Adrenal gland (tissue), 19 donors: ENCODE measurements at regions of chr13 and their contacts with region 1.

Region 1: DNA sequence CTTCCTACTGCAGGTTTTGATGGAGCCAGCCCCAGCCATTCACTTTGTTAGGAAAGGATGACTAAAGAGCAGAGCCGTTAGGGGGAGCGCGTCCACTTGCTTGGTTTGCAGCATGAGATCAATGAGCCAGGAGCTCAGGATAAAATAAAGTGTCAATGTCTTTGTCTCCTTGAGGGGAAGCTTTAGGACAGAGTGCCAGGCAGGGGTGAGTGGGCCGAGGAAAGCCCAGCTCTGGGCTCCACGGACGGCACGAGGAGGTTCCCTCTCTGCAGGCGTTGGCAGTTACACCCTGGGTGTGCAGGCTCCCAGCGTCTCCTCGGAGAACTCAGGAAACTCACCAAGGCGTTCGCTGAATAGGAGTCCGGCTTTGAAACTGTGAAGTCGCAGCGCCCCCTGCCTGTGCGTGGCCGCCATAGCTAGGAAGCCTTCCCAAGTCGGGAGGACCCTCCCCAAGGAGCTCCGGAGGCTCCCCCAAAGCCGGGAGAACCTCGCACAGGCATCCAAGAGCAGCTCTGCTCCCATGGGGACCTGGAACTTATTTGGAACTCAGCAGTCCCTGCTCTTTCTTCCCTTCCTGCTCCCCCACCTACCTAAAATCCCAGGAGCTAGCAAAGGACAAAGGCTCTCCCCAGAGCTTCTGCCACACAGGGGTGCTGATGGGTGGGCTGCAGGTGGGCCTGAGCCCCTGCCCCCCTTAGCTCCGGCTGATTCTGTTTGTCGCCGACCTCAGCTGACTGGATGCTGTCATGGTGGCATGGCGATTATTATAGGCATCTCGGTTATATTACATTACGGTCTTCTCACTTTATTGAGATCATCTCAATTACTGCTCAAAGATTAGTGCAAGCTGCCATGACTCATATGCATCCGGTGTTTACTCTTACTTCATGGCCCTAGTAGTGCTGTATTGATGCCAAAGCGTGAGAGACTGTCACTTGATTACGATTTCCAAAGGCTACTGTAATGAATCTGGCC is 34.4 kb downstream of the GSX1 start:
- DNase-seq: peak; percentile 72 to 91 (median 81)
- H3K4me3 ChIP-seq: peak overlapping the region in 1 of 4 donors; percentile 44
- H3K27ac ChIP-seq: no peak overlapping the region
- H3K4me1 ChIP-seq: no peaks in the 10 kb centered on the region
- H3K27me3 ChIP-seq: peaks cover 47% of the 10 kb centered on the region
- CTCF ChIP-seq: peak; percentile 74 to 93 (median 92)
- POLR2A ChIP-seq: no peak

Region 2: GRCh38 chr13:26985285-26985878 is 841.3 kb before region 1 on chr13:
- intact Hi-C with region 1: loop called in 1 of 2 experiments (anchors 10 kb)
- DNase-seq: peak; percentile 59 to 91 (median 74)
- H3K4me3 ChIP-seq: no peak overlapping the region
- H3K27ac ChIP-seq: no peak overlapping the region
- H3K4me1 ChIP-seq: no peaks in the 10 kb centered on the region
- H3K27me3 ChIP-seq: peaks cover 8% of the 10 kb centered on the region
- CTCF ChIP-seq: peak; percentile 50 to 94 (median 88)
- POLR2A ChIP-seq: no peak

Region 3: DNA sequence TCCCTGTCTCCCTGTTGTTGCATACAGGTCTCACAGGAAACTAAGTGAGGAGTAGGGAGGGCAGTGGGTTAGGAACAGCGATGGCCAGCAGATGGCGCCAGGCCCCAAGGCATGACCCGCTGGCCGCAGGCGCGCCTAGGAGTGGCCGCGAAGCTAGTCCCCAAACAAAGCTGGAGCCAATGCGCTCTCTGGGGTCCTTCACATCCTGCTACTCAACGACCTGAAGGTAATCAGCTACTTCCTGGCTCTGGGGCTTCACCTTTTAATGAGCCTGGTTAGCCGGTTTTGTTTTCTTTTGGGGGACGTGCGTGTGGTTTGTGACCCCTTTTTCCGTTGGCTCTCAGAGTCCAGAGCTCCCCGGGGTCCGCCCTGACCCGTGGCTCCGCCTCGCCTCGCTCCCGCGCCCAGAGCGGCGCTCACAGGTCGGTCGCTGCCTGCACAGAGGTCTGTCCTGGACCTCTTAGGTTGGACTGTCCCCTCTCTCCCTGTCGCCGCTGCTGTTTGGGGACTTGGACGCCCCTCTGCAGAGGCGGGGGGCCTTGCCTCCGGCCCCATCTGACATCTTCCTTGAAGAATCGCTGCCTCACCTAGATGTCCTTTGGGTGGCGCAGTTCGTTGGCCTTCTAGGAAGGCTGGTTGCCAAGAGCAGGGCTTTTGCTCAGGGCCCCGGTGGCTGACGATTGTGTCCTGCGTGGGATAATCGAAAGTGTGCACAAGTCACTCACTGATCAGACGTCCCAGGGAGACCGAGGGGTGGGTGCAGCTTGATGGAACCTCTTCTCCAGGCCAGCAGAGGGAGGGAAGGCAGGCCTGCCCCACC is 464.4 kb before region 1 on chr13:
- intact Hi-C with region 1: loop called in 1 of 2 experiments (anchors 5 kb)
- DNase-seq: peak; percentile 67 to 94 (median 83)
- H3K4me3 ChIP-seq: peak overlapping the region in 2 of 4 donors; percentile 10 to 47
- H3K27ac ChIP-seq: no peak overlapping the region
- H3K4me1 ChIP-seq: peaks cover 0 to 6% of the 10 kb centered on the region in 2 donors
- H3K27me3 ChIP-seq: peaks cover 6% of the 10 kb centered on the region
- CTCF ChIP-seq: peak; percentile 82 to 93 (median 90)
- POLR2A ChIP-seq: no peak

Region 4: DNA sequence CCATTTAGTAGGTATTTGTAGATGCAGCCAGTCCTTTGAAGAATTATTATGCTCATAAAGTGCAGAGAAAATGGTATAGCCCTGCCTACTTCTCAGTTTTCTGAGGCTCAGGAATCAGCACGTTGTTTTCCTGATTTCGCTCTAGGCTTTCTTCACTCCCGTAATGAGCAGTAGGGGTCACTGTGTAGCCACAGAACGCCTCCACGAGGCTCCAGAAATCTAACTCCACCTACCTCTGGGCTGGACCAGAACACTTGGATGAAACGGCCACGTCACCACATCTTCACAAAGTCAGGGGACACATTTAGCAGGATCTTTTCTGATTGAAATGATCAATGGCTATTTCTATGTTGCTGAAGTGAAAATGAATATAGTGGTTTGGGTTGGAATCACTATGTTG is 452.0 kb before region 1 on chr13:
- intact Hi-C with region 1: loop called (anchors 5 kb)
- DNase-seq: peak; percentile 47 to 86 (median 69)
- H3K4me3 ChIP-seq: no peak overlapping the region
- H3K27ac ChIP-seq: no peak overlapping the region
- H3K4me1 ChIP-seq: no peaks in the 10 kb centered on the region
- H3K27me3 ChIP-seq: peaks cover 25% of the 10 kb centered on the region
- CTCF ChIP-seq: peak; percentile 44 to 70 (median 62)
- POLR2A ChIP-seq: no peak

Region 5: DNA sequence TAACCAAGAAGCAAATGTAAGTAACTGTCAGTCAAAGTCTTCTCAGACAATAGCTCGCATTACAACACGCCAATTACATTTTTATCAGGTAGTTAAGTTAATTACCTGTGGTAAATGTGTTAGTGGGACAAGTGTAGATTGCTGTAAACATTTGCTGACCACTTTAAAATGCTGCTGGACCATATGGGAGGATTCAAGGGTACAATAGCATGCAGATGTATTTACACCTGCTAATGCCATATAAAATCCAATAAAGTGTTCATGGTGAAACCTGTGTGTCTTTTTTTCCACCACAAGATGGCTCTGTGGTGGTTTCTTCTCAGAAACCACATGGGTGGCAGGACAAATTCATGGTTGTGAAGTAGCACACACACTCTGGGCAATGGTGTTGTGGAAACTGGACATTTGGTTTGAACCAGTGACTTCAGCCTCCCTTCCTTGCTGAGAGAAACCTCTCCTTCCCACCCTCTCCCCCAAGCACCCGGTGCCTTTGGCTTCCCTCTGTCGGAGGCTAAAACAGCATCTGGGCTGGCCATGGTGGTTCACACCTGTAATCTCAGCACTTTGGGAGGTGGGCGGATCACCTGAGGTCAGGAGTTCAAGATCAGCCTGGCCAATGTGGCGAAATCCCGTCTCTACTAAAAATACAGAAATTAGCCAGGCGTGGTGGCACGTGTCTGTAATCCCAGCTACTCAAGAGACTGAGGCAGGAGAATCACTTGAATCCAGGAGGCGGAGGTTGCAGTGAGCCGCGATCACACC is 420.3 kb before region 1 on chr13:
- intact Hi-C with region 1: loop called in 1 of 2 experiments (anchors 10 kb)
- DNase-seq: peak in 3 of 7 donors; percentile 23 to 43 (median 31)
- H3K4me3 ChIP-seq: no peak overlapping the region
- H3K27ac ChIP-seq: no peak overlapping the region
- H3K4me1 ChIP-seq: no peaks in the 10 kb centered on the region
- H3K27me3 ChIP-seq: peaks cover 2% of the 10 kb centered on the region
- CTCF ChIP-seq: peak; percentile 42 to 75 (median 62)
- POLR2A ChIP-seq: no peak

Region 6: DNA sequence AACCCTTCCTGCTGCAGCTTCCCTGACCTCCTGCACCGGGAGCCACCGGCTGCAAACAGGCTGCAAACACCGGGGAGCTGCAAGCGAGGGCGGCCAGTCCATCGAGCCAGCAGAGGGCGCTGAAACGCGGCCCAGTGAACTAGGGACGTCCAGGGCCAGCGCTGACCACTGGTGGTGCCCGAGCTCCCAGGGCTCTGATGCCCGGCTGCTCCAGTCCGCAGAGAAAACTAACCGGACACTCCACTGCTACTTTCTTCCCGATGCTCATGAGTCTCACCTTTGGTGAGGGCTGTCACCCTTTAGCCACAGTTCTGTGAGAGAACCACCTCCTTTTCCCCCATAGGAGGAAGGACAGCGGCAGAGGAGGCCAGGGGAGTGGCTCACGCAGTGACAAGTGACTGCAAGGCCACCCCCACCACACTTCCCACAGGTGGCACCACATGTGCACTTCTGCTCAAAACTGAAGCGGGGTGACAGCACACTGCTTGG is 293.5 kb before region 1 on chr13:
- intact Hi-C with region 1: loop called (anchors 5 to 10 kb)
- DNase-seq: peak; percentile 88 to 95 (median 92)
- H3K4me3 ChIP-seq: peak overlapping the region in 1 of 4 donors; percentile 33
- H3K27ac ChIP-seq: no peak overlapping the region
- H3K4me1 ChIP-seq: no peaks in the 10 kb centered on the region
- H3K27me3 ChIP-seq: no peaks in the 10 kb centered on the region
- CTCF ChIP-seq: peak; percentile 90 to 97 (median 96)
- POLR2A ChIP-seq: no peak

Region 7: GRCh38 chr13:27980280-27980998 is 153.8 kb after region 1 on chr13:
- intact Hi-C with region 1: loop called (anchors 5 to 10 kb)
- DNase-seq: no peak
- H3K4me3 ChIP-seq: no peak overlapping the region
- H3K27ac ChIP-seq: no peak overlapping the region
- H3K4me1 ChIP-seq: no peaks in the 10 kb centered on the region
- H3K27me3 ChIP-seq: peaks cover 79% of the 10 kb centered on the region
- CTCF ChIP-seq: no peak
- POLR2A ChIP-seq: no peak